ENCODE measurements at regions of chr5 and their contacts with region 1.

Region 1: DNA sequence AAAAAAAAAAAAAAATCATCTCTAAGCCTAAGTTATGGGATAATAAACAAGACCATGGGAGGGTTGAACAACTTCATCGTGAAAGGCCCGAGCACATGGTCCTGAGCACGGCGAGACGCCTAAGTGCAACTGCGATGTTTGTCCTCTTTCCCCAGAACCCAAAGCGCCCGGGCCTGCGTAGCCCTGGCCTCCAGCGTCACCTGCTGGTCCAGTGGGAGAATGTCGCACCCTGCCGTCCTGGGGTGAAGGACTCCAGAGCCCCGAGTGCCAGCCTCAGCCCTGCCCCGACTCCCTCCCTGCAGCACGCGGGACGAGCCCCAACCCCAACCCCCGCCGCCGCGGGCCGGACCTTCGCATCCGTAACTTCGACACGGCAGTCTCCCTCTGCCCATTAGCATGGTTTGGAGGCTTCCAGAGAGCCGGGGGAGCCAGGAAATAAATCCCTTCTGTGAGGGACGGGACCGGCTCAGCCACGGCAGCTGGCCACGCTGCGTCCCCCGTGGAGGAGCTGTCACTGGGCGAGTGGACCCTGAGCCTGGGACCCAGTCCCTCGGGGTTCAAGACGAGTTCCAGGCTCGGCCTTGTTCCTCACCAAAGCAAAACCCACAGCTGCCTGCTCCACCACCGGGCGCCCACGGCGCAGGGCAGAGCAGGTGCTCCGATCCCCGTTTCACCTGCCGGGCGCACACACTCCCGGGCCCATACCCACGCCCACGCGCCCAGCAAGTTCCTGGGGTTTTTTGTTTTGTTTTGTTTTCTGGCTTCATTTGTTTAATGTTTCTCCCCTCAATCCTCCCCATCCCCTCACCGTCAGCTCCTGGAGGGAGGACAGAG is 132.5 kb upstream of the HAND1 start:
- DNase-seq: peak; percentile 60 to 69
- H3K4me3 ChIP-seq: peak overlapping the region in 1 of 2 donors; percentile 40
- H3K27ac ChIP-seq: no peak overlapping the region
- H3K4me1 ChIP-seq: peaks cover 4 to 18% (median 13%) of the 10 kb centered on the region in 4 donors
- H3K27me3 ChIP-seq: peaks cover 0 to 60% of the 10 kb centered on the region in 2 donors
- CTCF ChIP-seq: peak; percentile 74 to 76

Region 2: DNA sequence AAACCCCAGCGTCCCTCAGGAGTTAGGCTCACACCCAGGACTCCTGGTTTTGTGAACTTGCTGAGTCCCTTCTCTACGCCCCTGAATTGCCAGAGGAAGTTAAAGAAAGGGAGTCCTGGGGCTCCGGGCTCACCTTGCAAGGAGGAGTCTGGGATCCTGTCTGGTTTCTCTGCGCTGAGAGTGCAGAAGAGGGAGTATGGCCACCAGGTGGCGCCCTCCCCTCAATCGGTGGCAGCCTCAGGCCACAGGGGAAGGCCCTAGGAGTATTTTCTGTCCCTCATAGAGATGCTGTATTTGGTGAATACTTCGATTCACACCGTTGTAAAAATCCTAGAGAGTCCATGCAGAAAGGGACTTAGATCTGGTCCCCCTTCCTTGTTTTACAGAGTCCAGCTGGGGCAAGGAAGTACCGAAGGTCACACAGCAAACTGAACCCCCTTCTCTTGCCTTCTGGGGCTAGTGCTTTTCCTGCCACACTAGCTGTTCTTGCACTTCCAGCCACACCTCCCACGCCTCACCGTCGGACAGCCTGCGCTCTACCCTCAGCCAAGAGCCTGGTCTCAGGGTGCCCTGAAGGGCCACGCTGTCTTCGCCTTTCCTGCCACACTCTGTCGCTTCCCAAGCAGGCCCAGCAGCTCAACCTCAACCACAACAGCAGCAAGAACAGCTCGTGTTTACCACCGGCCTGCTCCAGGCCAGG is 142.7 kb before region 1 on chr5:
- intact Hi-C with region 1: loop called (anchors 2 kb)
- DNase-seq: peak; percentile 60 to 77
- H3K4me3 ChIP-seq: no peak overlapping the region
- H3K27ac ChIP-seq: no peak overlapping the region
- H3K4me1 ChIP-seq: peaks cover 0 to 3% (median 2%) of the 10 kb centered on the region in 4 donors
- H3K27me3 ChIP-seq: peaks cover 0 to 31% of the 10 kb centered on the region in 2 donors
- CTCF ChIP-seq: peak; percentile 71 to 88

Region 3: GRCh38 chr5:154647114-154647760 is 36.7 kb after region 1 on chr5:
- intact Hi-C with region 1: no loop called
- DNase-seq: peak in 1 of 2 donors; percentile 42
- H3K4me3 ChIP-seq: peak overlapping the region; percentile 29 to 45
- H3K27ac ChIP-seq: no peak overlapping the region
- H3K4me1 ChIP-seq: peaks cover 0 to 13% (median 7%) of the 10 kb centered on the region in 4 donors
- H3K27me3 ChIP-seq: peaks cover 0 to 4% of the 10 kb centered on the region in 2 donors
- CTCF ChIP-seq: no peak